ENCODE measurements at regions of chr13 and their contacts with region 1.

Region 1: GRCh38 chr13:112567161-112567862 is 20.6 kb downstream of the TUBGCP3 start:
- DNase-seq: no peak
- ATAC-seq: no peak
- H3K4me3 ChIP-seq: no peak overlapping the region
- H3K27ac ChIP-seq: no peak overlapping the region
- H3K4me1 ChIP-seq: no peaks in the 10 kb centered on the region
- H3K27me3 ChIP-seq: no peaks in the 10 kb centered on the region
- CTCF ChIP-seq: no peak

Region 2: GRCh38 chr13:112489199-112489598 is 78.1 kb before region 1 on chr13:
- CTCF ChIA-PET with region 1: no interaction called
- POLR2A ChIA-PET with region 1: interaction called, 11 read pairs
- intact Hi-C with region 1: no loop called
- DNase-seq: no peak
- ATAC-seq: no peak
- H3K4me3 ChIP-seq: no peak overlapping the region
- H3K27ac ChIP-seq: no peak overlapping the region
- H3K4me1 ChIP-seq: no peaks in the 10 kb centered on the region
- H3K27me3 ChIP-seq: no peaks in the 10 kb centered on the region
- CTCF ChIP-seq: no peak

Measured in PC-3 (cell line).